OCI-LY7 (cell line): ENCODE measurements at regions of chr4 and their contacts with region 1.

Region 1: GRCh38 chr4:159237975-159238374 is 135.1 kb downstream of the RAPGEF2 start:
- DNase-seq: no peak
- H3K4me3 ChIP-seq: no peak overlapping the region
- H3K27ac ChIP-seq: no peak overlapping the region
- H3K4me1 ChIP-seq: no peaks in the 10 kb centered on the region
- CTCF ChIP-seq: no peak

Region 2: GRCh38 chr4:159185591-159186023 is 52.4 kb before region 1 on chr4:
- CTCF ChIA-PET with region 1: no interaction called
- POLR2A ChIA-PET with region 1: interaction called, 11 read pairs
- intact Hi-C with region 1: no loop called
- DNase-seq: no peak
- H3K4me3 ChIP-seq: no peak overlapping the region
- H3K27ac ChIP-seq: no peak overlapping the region
- H3K4me1 ChIP-seq: no peaks in the 10 kb centered on the region
- CTCF ChIP-seq: no peak

Region 3: GRCh38 chr4:159632031-159632430 is 394.1 kb after region 1 on chr4:
- CTCF ChIA-PET with region 1: no interaction called
- POLR2A ChIA-PET with region 1: no interaction called
- intact Hi-C with region 1: no loop called
- DNase-seq: no peak
- H3K4me3 ChIP-seq: no peak overlapping the region
- H3K27ac ChIP-seq: no peak overlapping the region
- H3K4me1 ChIP-seq: no peaks in the 10 kb centered on the region
- CTCF ChIP-seq: no peak